ENCODE measurements at regions of chr16 and their contacts with region 1.

Region 1: DNA sequence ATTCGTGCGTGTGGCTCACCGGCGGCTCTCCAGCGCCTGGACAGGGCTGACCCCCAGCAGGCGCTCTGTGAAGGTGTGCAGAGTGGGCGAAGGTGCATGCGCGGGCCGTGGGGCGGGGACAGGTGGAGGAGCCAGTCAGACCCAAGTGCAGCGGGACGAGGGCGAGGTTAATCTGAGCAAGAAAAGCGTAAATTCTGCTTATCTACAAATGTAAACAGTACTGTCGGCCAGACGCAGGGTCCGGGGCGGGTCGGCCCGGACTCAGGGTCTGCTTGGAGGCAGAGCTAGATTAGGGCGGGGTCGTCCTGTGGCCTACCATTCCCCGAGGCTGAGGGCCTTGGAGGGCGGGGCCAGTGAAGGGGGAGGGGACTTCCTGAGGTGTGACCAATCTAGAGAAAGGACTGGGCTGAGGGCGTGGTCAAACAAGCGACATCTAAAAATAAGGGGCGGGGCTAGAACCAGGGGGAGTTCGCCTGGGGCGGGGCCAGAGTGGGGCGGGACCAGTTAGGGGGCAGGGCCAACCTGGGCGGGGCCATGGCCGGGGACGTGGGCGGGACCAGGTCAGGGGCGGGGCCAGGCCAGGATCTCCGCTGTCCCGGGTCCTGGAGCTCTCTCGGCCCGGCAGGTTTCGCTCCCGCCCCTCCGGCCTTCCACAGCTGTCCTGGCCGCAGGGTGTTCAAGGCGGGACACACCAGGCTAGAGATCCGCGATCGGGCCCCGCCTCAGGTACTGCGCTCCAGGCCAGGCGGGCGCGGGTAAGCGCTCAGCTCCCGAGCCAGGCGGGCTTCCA is at the start of gene SEC14L5:
- DNase-seq: peak; percentile 97 to 98
- ATAC-seq: peak; percentile 94 to 96
- H3K4me3 ChIP-seq: peak within 1 kb of the TSS; percentile 50 to 76 (median 58)
- H3K27ac ChIP-seq: peak within 1 kb of the TSS; percentile 53 to 81 (median 72)
- H3K4me1 ChIP-seq: peaks cover 6 to 11% of the 10 kb centered on the region in 2 donors
- H3K27me3 ChIP-seq: no peaks in the 10 kb centered on the region
- CTCF ChIP-seq: no peak
- POLR2A ChIP-seq: no peak
- total RNA-seq, gene SEC14L5: 0.85 to 5.8 (median 1.5) TPM

Region 2: DNA sequence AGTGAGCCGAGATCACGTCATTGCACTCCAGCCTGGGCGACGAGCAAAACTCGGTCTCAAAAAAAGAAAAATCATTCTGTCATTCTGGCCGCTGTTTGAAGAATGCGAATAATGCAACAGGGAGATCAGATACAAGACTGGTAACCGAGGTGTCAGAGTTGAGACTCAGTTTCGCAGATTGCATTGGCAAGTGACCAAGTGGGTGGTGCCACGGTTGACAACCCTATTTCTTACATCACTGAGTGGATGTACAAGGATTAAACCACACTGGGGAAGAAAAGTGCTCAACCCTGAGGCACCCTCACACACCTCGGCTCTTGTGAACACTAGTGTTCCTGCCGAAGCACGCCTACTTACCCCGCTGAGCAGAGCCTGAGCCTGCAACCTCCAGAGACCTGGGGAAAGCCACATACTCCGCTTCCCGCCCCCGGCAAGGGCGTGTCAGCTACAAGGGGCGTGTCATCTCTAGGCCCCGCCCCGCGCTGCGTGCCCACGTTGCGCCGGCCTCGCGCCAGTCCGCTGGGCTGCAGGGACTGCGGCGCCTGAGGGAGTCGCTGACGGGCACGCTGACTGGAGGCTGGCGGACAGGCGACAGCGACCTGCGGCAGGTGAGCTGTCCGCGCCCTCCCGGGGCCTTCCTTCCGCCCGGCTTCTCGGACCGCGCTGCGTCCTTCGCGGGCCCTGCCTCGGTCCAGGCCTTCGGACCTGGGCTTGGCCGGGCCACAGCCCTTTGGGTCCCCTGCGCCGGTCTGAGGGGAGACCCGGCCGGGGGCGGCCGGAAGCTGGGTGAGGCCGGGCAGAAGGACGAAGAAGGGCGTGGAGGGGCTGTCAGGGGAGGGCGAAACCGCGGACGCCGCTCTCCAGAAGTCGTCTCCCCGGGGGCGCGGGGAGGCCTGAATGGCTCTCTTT is 481.8 kb before region 1 on chr16 and contains the start of gene HMOX2:
- in situ Hi-C with region 1: loop called in 1 of 4 experiments (anchors 25 kb)
- intact Hi-C with region 1: no loop called
- DNase-seq: peak; percentile 88 to 91
- ATAC-seq: peak; percentile 90 to 91
- H3K4me3 ChIP-seq: peak within 1 kb of the TSS; percentile 84 to 99 (median 89)
- H3K27ac ChIP-seq: peak within 1 kb of the TSS; percentile 85 to 96 (median 89)
- H3K4me1 ChIP-seq: peaks cover 11 to 22% of the 10 kb centered on the region in 2 donors
- H3K27me3 ChIP-seq: peaks cover 0 to 12% (median 12%) of the 10 kb centered on the region in 3 donors
- CTCF ChIP-seq: peak in 4 of 5 experiments; percentile 24 to 47 (median 36)
- POLR2A ChIP-seq: peak; percentile 84 to 88
- total RNA-seq, gene HMOX2: 21.7 to 30.0 (median 28.4) TPM

Region 3: GRCh38 chr16:4693296-4693955 is 264.5 kb before region 1 on chr16 and contains the start of gene NUDT16L1:
- in situ Hi-C with region 1: no loop called
- intact Hi-C with region 1: loop called (anchors 2 kb)
- DNase-seq: peak; percentile 90 to 95
- ATAC-seq: peak; percentile 83 to 86
- H3K4me3 ChIP-seq: peak within 1 kb of the TSS; percentile 68 to 90 (median 82)
- H3K27ac ChIP-seq: peak within 1 kb of the TSS; percentile 66 to 89 (median 82)
- H3K4me1 ChIP-seq: peaks cover 19 to 25% of the 10 kb centered on the region in 2 donors
- H3K27me3 ChIP-seq: no peaks in the 10 kb centered on the region
- CTCF ChIP-seq: peak in 4 of 5 experiments; percentile 31 to 57 (median 42)
- POLR2A ChIP-seq: peak; percentile 43 to 50
- total RNA-seq, gene NUDT16L1: 7.4 to 10.2 (median 8.8) TPM

Region 4: DNA sequence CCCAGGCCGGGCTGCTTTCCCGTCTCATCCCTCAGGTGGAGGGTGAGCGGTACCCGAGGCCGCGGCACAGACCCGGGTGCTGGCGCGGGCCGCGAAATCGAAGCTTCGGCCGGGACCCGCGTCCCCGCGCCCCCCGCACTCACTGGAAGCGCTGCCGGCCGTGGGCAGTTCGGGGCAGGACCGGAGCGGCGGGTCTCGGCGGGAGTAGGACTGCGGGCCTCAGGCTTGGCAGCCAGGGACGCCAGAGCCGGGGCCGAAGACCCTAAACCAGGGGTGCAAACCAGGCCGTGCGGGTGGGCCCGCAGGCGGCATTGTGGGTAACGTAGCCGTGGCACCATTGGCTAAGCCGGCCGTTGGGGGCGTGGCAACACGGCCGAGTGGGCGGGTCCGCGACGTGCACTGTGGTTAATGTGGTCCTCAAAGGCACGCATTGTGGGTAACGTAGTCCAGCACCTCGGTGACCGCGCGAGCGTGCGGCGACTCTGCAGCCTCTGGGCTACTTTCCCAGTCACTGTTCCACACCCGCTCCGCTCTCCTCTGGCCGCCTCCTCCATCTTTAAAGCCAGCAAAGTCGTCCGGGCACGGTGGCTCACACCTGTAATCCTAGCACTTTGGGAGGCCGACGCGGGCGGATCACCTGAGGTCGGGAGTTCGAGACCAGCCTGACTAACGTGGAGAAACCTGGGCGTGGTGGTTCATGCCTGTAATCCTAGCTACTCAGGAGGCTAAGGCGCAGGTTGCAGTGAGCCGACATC is 190.9 kb before region 1 on chr16 and contains the start of gene ZNF500:
- in situ Hi-C with region 1: no loop called
- intact Hi-C with region 1: loop called (anchors 1 kb)
- DNase-seq: peak; percentile 97 to 98
- ATAC-seq: peak; percentile 89 to 95
- H3K4me3 ChIP-seq: peak within 1 kb of the TSS; percentile 80 to 99 (median 90)
- H3K27ac ChIP-seq: peak within 1 kb of the TSS; percentile 83 to 95 (median 92)
- H3K4me1 ChIP-seq: peaks cover 25 to 30% of the 10 kb centered on the region in 2 donors
- H3K27me3 ChIP-seq: no peaks in the 10 kb centered on the region
- CTCF ChIP-seq: no peak
- POLR2A ChIP-seq: peak; percentile 69 to 70
- total RNA-seq, gene ZNF500: 6.3 to 7.3 (median 6.9) TPM

Region 5: GRCh38 chr16:4982056-4982867 is 24.3 kb after region 1 on chr16:
- in situ Hi-C with region 1: no loop called
- intact Hi-C with region 1: loop called (anchors 1 kb)
- DNase-seq: peak; percentile 76 to 91
- ATAC-seq: peak; percentile 86 to 91
- H3K4me3 ChIP-seq: peak overlapping the region; percentile 31 to 51 (median 45)
- H3K27ac ChIP-seq: peak overlapping the region; percentile 90 to 96 (median 92)
- H3K4me1 ChIP-seq: peaks cover 23 to 34% of the 10 kb centered on the region in 2 donors
- H3K27me3 ChIP-seq: peaks cover 0 to 4% (median 0%) of the 10 kb centered on the region in 3 donors
- CTCF ChIP-seq: no peak
- POLR2A ChIP-seq: peak; percentile 14 to 26